ENCODE measurements at regions of chr10 and their contacts with region 1.

Region 1: GRCh38 chr10:24360282-24361127 is 151.6 kb downstream of the KIAA1217 start:
- DNase-seq: peak; percentile 62 to 76
- ATAC-seq: peak; percentile 45 to 83 (median 80)
- H3K4me3 ChIP-seq: no peak overlapping the region
- H3K27ac ChIP-seq: no peak overlapping the region
- H3K4me1 ChIP-seq: peaks cover 0 to 26% (median 7%) of the 10 kb centered on the region in 9 donors
- H3K27me3 ChIP-seq: no peaks in the 10 kb centered on the region
- CTCF ChIP-seq: peak; percentile 53 to 88 (median 74)

Region 2: GRCh38 chr10:24202181-24202570 is 158.3 kb before region 1 on chr10:
- intact Hi-C with region 1: loop called in 6 of 10 experiments (anchors 2 to 5 kb)
- DNase-seq: no peak
- ATAC-seq: peak in 2 of 8 donors; percentile 12 to 31
- H3K4me3 ChIP-seq: no peak overlapping the region
- H3K27ac ChIP-seq: peak overlapping the region in 5 of 10 donors; percentile 2 to 61 (median 10)
- H3K4me1 ChIP-seq: peaks cover 5 to 57% (median 16%) of the 10 kb centered on the region in 9 donors
- H3K27me3 ChIP-seq: no peaks in the 10 kb centered on the region
- CTCF ChIP-seq: no peak

Region 3: DNA sequence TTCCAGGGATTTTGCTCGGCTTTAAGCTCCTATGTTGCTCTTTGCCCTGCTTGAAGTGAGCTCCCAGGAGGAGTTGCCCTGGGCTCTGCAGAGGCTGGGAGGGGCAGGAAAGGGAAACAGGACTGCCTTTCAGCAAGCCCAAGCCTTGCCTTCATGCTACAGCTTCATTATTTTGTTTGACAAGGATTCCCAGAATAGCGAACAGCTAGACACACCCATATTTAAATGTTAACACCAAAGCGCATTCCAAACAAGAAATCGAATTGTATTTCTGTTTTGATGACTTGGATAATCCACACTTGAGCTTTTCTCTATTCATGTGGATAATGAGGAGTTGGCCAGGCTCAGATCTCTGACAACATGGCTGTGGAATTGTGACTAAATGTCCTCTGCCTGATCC is 145.3 kb before region 1 on chr10:
- intact Hi-C with region 1: loop called in 3 of 10 experiments (anchors 5 to 10 kb)
- DNase-seq: peak in 1 of 2 donors; percentile 47
- ATAC-seq: peak; percentile 40 to 81 (median 76)
- H3K4me3 ChIP-seq: peak overlapping the region in 2 of 10 donors; percentile 20 to 25
- H3K27ac ChIP-seq: peak overlapping the region; percentile 39 to 84 (median 74)
- H3K4me1 ChIP-seq: peaks cover 12 to 85% (median 56%) of the 10 kb centered on the region in 9 donors
- H3K27me3 ChIP-seq: peaks cover 0 to 4% (median 0%) of the 10 kb centered on the region in 7 donors
- CTCF ChIP-seq: no peak

Region 4: GRCh38 chr10:24238519-24239252 is 121.8 kb before region 1 on chr10:
- intact Hi-C with region 1: no loop called
- DNase-seq: no peak
- ATAC-seq: no peak
- H3K4me3 ChIP-seq: no peak overlapping the region
- H3K27ac ChIP-seq: peak overlapping the region in 1 of 10 donors; percentile 12
- H3K4me1 ChIP-seq: peaks cover 0 to 58% (median 31%) of the 10 kb centered on the region in 9 donors
- H3K27me3 ChIP-seq: no peaks in the 10 kb centered on the region
- CTCF ChIP-seq: no peak

Region 5: DNA sequence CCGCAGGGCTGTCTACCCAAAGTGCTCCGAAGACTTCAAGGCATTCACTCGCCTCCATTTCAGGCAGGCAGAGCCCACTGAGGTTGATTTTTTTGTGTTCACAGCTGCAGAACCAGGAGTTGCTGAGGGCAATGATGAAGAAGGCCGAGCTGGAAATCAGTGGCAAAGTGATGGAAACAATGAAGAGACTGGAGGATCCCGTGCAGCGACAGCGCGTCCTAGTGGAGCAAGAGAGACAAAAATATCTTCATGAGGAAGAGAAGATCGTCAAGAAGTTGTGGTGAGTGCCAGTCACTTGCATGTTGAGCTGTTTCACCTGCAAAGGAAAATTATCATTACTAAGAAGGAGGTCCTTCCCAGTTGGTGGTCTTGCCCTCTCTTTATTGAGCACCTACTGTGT is 152.7 kb after region 1 on chr10:
- intact Hi-C with region 1: loop called in 4 of 10 experiments (anchors 5 to 10 kb)
- DNase-seq: no peak
- ATAC-seq: no peak
- H3K4me3 ChIP-seq: no peak overlapping the region
- H3K27ac ChIP-seq: no peak overlapping the region
- H3K4me1 ChIP-seq: no peaks in the 10 kb centered on the region
- H3K27me3 ChIP-seq: no peaks in the 10 kb centered on the region
- CTCF ChIP-seq: peak in 6 of 9 donors; percentile 14 to 39 (median 24)